Posterior vena cava (tissue), 2 donors: ENCODE measurements at regions of chr19 and their contacts with region 1.

Region 1: DNA sequence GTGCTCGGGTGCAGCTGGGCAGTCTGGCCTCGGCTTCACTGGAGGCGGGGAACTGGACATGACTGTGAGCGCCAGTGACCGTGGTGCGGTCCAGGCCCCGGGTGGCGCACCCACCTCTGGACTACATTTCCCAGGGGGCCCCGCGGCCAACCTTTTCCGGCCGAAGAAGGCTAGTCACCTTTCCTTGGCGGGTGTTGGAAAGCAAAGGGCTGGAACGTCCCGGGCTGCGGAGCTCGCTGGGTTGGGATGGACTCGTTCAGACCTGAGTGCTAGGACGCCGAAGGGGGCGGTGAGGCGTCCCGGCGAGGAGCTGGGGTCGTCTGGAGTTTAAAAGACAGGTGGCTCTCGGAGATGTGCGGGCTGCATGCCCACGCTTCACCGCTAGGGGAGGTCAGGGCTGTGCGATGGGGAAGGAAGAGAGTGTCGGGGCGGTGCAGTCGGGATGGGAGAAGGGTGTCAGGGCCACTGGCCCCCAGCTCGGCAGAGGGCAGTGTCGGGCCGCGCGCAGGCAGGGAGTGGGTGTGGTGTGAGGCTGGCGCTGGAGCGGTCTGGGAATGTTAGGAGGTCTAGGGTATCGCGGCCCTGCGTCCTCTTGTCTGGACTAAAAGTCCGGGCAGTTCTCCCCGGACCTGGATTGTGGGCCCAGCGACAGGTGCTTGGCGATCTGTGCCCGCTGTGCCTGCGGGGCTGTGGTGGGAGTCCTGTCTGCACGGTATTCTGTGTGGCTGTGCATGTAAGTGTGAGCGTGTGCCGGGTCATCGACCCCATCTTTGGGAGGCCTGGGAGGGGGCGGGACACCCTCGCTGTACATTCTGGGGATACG is 57.1 kb downstream of the ZNF568 start:
- DNase-seq: peak; percentile 94

Region 2: GRCh38 chr19:37227996-37228395 is 254.8 kb after region 1 on chr19:
- intact Hi-C with region 1: loop called in 1 of 2 experiments (anchors 5 kb)
- DNase-seq: no peak